Ascending aorta (tissue), 2 donors: ENCODE measurements at regions of chr14 and their contacts with region 1.

Region 1: GRCh38 chr14:69818757-69819191 is 21.7 kb upstream of the SLC10A1 start:
- DNase-seq: peak in 1 of 2 donors; percentile 67
- H3K4me3 ChIP-seq: no peak overlapping the region
- H3K27ac ChIP-seq: no peak overlapping the region
- H3K4me1 ChIP-seq: no peaks in the 10 kb centered on the region
- H3K27me3 ChIP-seq: no peaks in the 10 kb centered on the region
- CTCF ChIP-seq: peak; percentile 67 to 91 (median 72)

Region 2: GRCh38 chr14:70027785-70028428 is 209.1 kb after region 1 on chr14:
- intact Hi-C with region 1: loop called (anchors 1 kb)
- DNase-seq: peak in 1 of 2 donors; percentile 74
- H3K4me3 ChIP-seq: no peak overlapping the region
- H3K27ac ChIP-seq: no peak overlapping the region
- H3K4me1 ChIP-seq: no peaks in the 10 kb centered on the region
- H3K27me3 ChIP-seq: no peaks in the 10 kb centered on the region
- CTCF ChIP-seq: peak; percentile 63 to 68 (median 68)

Region 3: GRCh38 chr14:70073924-70074566 is 255.3 kb after region 1 on chr14:
- intact Hi-C with region 1: loop called (anchors 5 kb)
- DNase-seq: peak in 1 of 2 donors; percentile 16
- H3K4me3 ChIP-seq: no peak overlapping the region
- H3K27ac ChIP-seq: no peak overlapping the region
- H3K4me1 ChIP-seq: no peaks in the 10 kb centered on the region
- H3K27me3 ChIP-seq: no peaks in the 10 kb centered on the region
- CTCF ChIP-seq: peak in 2 of 3 experiments; percentile 9 to 40

Region 4: GRCh38 chr14:70567791-70568190 is 749.0 kb after region 1 on chr14:
- intact Hi-C with region 1: no loop called
- DNase-seq: no peak
- H3K4me3 ChIP-seq: no peak overlapping the region
- H3K27ac ChIP-seq: no peak overlapping the region
- H3K4me1 ChIP-seq: no peaks in the 10 kb centered on the region
- H3K27me3 ChIP-seq: no peaks in the 10 kb centered on the region
- CTCF ChIP-seq: no peak